ENCODE measurements at regions of chr5 and their contacts with region 1.

Region 1: DNA sequence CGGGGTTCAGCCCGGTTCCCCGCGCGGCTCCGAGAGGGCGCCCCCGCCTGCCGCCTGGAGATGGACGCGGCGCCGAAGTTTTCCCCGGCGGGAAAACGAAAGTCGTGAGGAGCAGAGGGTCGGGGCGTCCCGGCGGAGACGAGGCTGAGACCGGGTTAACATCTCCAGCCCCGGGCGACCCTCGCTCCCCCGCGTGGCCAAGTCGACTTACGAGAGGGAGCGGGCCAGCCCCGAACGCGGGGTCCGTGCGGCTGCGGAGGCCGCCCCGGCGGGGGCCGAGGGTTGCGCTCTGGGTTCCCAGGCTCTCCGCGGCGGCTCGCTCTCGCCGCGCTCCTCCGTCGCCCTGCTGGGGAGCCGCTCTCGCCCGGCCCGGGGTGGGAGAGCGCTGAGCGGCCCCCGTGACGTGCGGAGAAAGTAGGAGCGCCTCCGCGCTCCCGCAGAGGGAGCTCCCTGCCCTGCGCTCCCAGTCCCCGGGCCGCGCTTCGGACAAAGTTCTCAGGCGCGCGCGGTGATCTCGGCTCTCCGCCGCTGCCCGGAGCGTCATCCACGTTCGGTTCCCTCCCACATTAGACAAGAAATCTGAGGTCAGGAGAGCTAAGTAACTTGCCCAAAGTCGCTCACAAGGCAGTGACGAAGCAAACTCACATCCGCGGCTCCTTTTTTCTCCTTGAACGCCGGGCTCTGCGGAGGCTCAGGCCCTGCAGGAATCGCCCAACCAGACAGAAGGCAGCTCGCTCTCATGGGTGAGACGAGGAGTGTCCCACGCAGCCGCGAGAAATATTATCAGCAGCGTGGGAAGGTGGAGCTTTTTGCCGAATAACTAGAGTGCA is 1.2 kb upstream of the GCNT4 start:
- DNase-seq: peak; percentile 61 to 74 (median 73)
- H3K4me3 ChIP-seq: peak overlapping the region; percentile 43 to 74
- H3K4me3 Mint-ChIP-seq: peak overlapping the region; percentile 89 to 93 (median 92)
- H3K27ac ChIP-seq: peak overlapping the region; percentile 67
- H3K27ac Mint-ChIP-seq: peak overlapping the region; percentile 91 to 96 (median 93)
- H3K4me1 ChIP-seq: peaks cover 78% of the 10 kb centered on the region
- H3K4me1 Mint-ChIP-seq: peaks cover 46 to 85% (median 75%) of the 10 kb centered on the region in 4 donors
- H3K27me3 ChIP-seq: no peaks in the 10 kb centered on the region
- H3K27me3 Mint-ChIP-seq: peaks cover 0 to 3% of the 10 kb centered on the region in 2 donors

Region 2: GRCh38 chr5:74766849-74767578 is 286.5 kb before region 1 on chr5 and contains the starts of genes GFM2 and NSA2:
- CTCF ChIA-PET with region 1: no interaction called
- POLR2A ChIA-PET with region 1: interaction called, 3 read pairs
- intact Hi-C with region 1: loop called (anchors 1 kb)
- DNase-seq: peak; percentile 92 to 94 (median 92)
- H3K4me3 ChIP-seq: peak within 1 kb of the TSS; percentile 93 to 100
- H3K4me3 Mint-ChIP-seq: peak within 1 kb of the TSS; percentile 95 to 100 (median 100)
- H3K27ac ChIP-seq: peak within 1 kb of the TSS; percentile 86
- H3K27ac Mint-ChIP-seq: peak within 1 kb of the TSS; percentile 91 to 99 (median 99)
- H3K4me1 ChIP-seq: peaks cover 35% of the 10 kb centered on the region
- H3K4me1 Mint-ChIP-seq: peaks cover 22 to 51% (median 35%) of the 10 kb centered on the region in 4 donors
- H3K27me3 ChIP-seq: no peaks in the 10 kb centered on the region
- H3K27me3 Mint-ChIP-seq: no peaks in the 10 kb centered on the region
- total RNA-seq, gene GFM2: 21.3 to 21.6 TPM
- total RNA-seq, gene NSA2: 103 to 120 TPM

Region 3: GRCh38 chr5:75037135-75037534 is 16.4 kb before region 1 on chr5:
- CTCF ChIA-PET with region 1: interaction called, 25 read pairs
- POLR2A ChIA-PET with region 1: interaction called, 12 read pairs
- intact Hi-C with region 1: no loop called
- DNase-seq: no peak
- H3K4me3 ChIP-seq: no peak overlapping the region
- H3K4me3 Mint-ChIP-seq: peak overlapping the region in 1 of 8 donors; percentile 36
- H3K27ac ChIP-seq: no peak overlapping the region
- H3K27ac Mint-ChIP-seq: peak overlapping the region in 2 of 7 donors; percentile 33 to 43
- H3K4me1 ChIP-seq: peaks cover 32% of the 10 kb centered on the region
- H3K4me1 Mint-ChIP-seq: peaks cover 24 to 71% (median 62%) of the 10 kb centered on the region in 4 donors
- H3K27me3 ChIP-seq: no peaks in the 10 kb centered on the region
- H3K27me3 Mint-ChIP-seq: no peaks in the 10 kb centered on the region

Region 4: DNA sequence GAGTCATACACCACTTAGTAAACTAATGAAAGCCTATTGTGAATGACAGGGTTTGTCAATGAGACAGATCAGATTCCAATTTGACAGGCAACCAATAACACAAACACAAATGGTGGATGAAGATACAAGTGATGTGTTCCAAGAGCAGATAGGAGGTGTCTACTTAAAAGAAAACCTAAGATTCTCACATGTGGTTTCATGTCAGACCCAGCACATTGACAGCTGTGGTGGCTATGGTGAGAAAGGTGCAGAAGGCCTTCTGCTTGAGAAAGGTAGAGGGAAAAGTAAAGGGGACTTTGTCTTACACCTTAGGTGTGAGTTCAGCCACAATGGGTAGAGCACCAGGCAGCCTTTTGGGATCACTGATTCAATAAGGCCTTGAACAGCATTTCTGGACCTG is 172.0 kb after region 1 on chr5:
- CTCF ChIA-PET with region 1: interaction called, 3 read pairs
- POLR2A ChIA-PET with region 1: interaction called, 5 read pairs
- intact Hi-C with region 1: loop called (anchors 2 kb)
- DNase-seq: no peak
- H3K4me3 ChIP-seq: no peak overlapping the region
- H3K4me3 Mint-ChIP-seq: no peak overlapping the region
- H3K27ac ChIP-seq: no peak overlapping the region
- H3K27ac Mint-ChIP-seq: no peak overlapping the region
- H3K4me1 ChIP-seq: no peaks in the 10 kb centered on the region
- H3K4me1 Mint-ChIP-seq: peaks cover 0 to 3% (median 0%) of the 10 kb centered on the region in 4 donors
- H3K27me3 ChIP-seq: no peaks in the 10 kb centered on the region
- H3K27me3 Mint-ChIP-seq: no peaks in the 10 kb centered on the region

Region 5: GRCh38 chr5:75336625-75337339 is 283.3 kb after region 1 on chr5 and contains the start of gene HMGCR:
- CTCF ChIA-PET with region 1: interaction called, 8 read pairs
- POLR2A ChIA-PET with region 1: interaction called, 11 read pairs
- intact Hi-C with region 1: loop called (anchors 2 kb)
- DNase-seq: peak; percentile 95 to 98 (median 97)
- H3K4me3 ChIP-seq: peak within 1 kb of the TSS; percentile 90
- H3K4me3 Mint-ChIP-seq: no peak within 1 kb of the TSS
- H3K27ac ChIP-seq: peak within 1 kb of the TSS; percentile 72
- H3K27ac Mint-ChIP-seq: peak within 1 kb of the TSS in 1 of 7 donors; percentile 96
- H3K4me1 ChIP-seq: peaks cover 26% of the 10 kb centered on the region
- H3K4me1 Mint-ChIP-seq: peaks cover 27 to 39% (median 29%) of the 10 kb centered on the region in 4 donors
- H3K27me3 ChIP-seq: no peaks in the 10 kb centered on the region
- H3K27me3 Mint-ChIP-seq: no peaks in the 10 kb centered on the region
- total RNA-seq, gene HMGCR: 39.6 to 43.0 TPM

Measured in CD4-positive, alpha-beta memory T cell (primary cell).